Caco-2 (cell line): ENCODE measurements at regions of chr1 and their contacts with region 1.

Region 1: GRCh38 chr1:206030714-206031113 is 7.0 kb upstream of the CTSE start:
- DNase-seq: peak; percentile 82 to 86
- H3K4me3 ChIP-seq: no peak overlapping the region
- H3K4me3 Mint-ChIP-seq: no peak overlapping the region
- H3K27ac Mint-ChIP-seq: no peak overlapping the region
- H3K4me1 ChIP-seq: peaks cover 10% of the 10 kb centered on the region
- H3K4me1 Mint-ChIP-seq: peaks cover 5% of the 10 kb centered on the region
- H3K27me3 ChIP-seq: no peaks in the 10 kb centered on the region
- H3K27me3 Mint-ChIP-seq: peaks cover 7% of the 10 kb centered on the region
- CTCF ChIP-seq: peak; percentile 79 to 97

Region 2: GRCh38 chr1:205994346-205994745 is 36.4 kb before region 1 on chr1:
- CTCF ChIA-PET with region 1: no interaction called
- POLR2A ChIA-PET with region 1: no interaction called
- intact Hi-C with region 1: loop called (anchors 5 kb)
- DNase-seq: no peak
- H3K4me3 ChIP-seq: no peak overlapping the region
- H3K4me3 Mint-ChIP-seq: no peak overlapping the region
- H3K27ac Mint-ChIP-seq: no peak overlapping the region
- H3K4me1 ChIP-seq: no peaks in the 10 kb centered on the region
- H3K4me1 Mint-ChIP-seq: no peaks in the 10 kb centered on the region
- H3K27me3 ChIP-seq: no peaks in the 10 kb centered on the region; the same call in none of the 2 replicates
- H3K27me3 Mint-ChIP-seq: peaks cover 21% of the 10 kb centered on the region
- CTCF ChIP-seq: no peak